Mammary epithelial cell (primary cell): ENCODE measurements at regions of chr2 and their contacts with region 1.

Region 1: DNA sequence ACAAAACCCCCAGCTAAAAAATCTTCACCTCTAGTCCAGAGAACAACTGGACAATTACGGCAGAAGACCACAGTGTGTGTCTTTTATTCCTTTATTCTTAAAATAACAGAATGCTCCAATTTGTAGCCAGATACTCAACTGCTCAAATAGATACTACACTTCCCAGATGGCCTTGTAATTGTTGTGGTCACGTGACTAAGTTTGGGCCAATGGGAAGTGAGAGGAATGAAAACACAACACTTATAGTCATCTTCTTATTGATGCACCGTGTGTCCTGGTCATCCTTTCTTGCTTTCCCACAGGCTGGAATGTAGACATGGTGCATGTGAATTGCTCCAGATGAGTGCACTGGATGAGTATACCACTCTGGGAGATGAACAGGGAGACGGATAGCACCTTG is 145.1 kb downstream of the CDC42EP3 start:
- DNase-seq: peak; percentile 11
- H3K4me3 ChIP-seq: no peak overlapping the region
- H3K27ac ChIP-seq: no peak overlapping the region
- H3K4me1 ChIP-seq: peaks cover 3% of the 10 kb centered on the region
- H3K27me3 ChIP-seq: no peaks in the 10 kb centered on the region
- CTCF ChIP-seq: no peak

Region 2: GRCh38 chr2:37180006-37180639 is 346.2 kb before region 1 on chr2:
- CTCF ChIA-PET with region 1: no interaction called
- dilution Hi-C with region 1: no loop called
- in situ Hi-C with region 1: no loop called
- intact Hi-C with region 1: loop called (anchors 5 kb)
- DNase-seq: peak; percentile 45
- H3K4me3 ChIP-seq: no peak overlapping the region
- H3K27ac ChIP-seq: no peak overlapping the region
- H3K4me1 ChIP-seq: no peaks in the 10 kb centered on the region
- H3K27me3 ChIP-seq: no peaks in the 10 kb centered on the region
- CTCF ChIP-seq: peak in 1 of 2 donors; percentile 0

Region 3: GRCh38 chr2:37456479-37456878 is 69.8 kb before region 1 on chr2:
- CTCF ChIA-PET with region 1: no interaction called
- dilution Hi-C with region 1: no loop called
- in situ Hi-C with region 1: no loop called
- intact Hi-C with region 1: no loop called
- DNase-seq: no peak
- H3K4me3 ChIP-seq: no peak overlapping the region
- H3K27ac ChIP-seq: no peak overlapping the region
- H3K4me1 ChIP-seq: peaks cover 28% of the 10 kb centered on the region
- H3K27me3 ChIP-seq: no peaks in the 10 kb centered on the region
- CTCF ChIP-seq: no peak